Right ventricle myocardium superior (tissue), 1 donor: ENCODE measurements at regions of chr11 and their contacts with region 1.

Region 1: DNA sequence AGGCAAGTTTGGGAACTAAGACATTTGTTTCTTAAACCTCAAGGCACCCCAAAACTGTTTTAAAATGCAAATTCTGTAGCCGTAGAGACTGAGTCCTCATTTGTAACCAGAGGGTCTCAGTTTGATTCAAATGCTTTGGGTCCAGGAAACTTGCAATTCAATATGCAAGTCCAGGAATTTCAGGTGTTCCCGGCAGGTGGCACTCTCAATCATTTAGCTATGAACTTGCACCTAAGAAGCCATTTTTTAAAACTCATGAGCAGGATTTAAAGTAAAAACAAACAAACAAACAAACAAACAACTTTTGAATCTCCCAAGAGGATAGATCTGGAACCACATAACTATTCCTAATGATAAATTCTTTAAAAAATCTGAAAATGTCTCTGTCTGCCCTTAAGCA is 8.7 kb upstream of the ABTB2 start:
- DNase-seq: no peak
- ATAC-seq: no peak

Region 2: DNA sequence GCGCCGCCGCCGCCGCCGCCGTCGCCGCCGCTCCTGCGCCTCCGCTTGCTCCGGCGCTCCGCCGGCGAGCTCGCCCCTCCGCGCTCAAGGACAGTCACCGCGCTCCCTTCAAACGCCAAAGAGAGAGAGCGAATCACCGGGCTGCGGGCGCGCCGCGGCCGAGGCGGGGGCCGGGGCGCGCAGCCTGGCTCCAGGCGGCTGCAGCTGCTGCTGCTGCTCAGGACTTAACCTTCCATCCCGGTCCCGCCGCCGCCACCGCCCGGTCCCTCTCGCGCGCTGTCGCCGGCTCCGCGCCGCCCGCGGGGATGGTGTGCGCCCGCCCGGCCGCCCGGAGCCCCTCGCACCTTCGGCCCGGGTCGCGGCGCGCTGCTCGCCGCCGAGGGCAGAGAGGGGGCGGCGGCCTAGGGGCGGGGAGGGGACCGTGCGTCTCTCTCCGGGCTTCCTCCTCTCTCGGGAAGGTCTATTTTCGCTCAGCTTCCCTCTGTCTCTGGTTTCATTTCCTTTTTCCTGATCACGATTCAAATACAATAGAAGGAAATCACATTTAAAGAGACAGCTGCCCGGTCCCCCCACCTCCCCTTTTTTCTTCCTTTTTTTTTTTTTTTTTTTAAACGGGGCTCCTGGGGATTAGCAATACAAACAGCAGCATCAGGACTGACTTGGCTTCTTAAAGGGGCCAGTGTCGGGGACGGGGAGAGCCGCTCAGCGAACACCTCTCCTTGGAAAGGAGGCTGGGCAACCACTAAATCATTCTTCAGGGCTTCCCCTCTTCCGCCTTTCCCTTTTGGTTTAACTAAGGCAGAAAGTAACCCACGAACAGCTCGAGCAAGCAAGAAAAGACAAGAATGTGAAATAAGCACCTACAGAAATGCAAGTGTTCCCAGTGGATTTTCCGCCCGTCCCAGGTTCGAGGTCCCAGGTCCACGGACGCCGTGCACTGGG is 496.8 kb before region 1 on chr11:
- intact Hi-C with region 1: loop called (anchors 10 kb)
- DNase-seq: peak; percentile 69
- ATAC-seq: peak; percentile 73

Region 3: DNA sequence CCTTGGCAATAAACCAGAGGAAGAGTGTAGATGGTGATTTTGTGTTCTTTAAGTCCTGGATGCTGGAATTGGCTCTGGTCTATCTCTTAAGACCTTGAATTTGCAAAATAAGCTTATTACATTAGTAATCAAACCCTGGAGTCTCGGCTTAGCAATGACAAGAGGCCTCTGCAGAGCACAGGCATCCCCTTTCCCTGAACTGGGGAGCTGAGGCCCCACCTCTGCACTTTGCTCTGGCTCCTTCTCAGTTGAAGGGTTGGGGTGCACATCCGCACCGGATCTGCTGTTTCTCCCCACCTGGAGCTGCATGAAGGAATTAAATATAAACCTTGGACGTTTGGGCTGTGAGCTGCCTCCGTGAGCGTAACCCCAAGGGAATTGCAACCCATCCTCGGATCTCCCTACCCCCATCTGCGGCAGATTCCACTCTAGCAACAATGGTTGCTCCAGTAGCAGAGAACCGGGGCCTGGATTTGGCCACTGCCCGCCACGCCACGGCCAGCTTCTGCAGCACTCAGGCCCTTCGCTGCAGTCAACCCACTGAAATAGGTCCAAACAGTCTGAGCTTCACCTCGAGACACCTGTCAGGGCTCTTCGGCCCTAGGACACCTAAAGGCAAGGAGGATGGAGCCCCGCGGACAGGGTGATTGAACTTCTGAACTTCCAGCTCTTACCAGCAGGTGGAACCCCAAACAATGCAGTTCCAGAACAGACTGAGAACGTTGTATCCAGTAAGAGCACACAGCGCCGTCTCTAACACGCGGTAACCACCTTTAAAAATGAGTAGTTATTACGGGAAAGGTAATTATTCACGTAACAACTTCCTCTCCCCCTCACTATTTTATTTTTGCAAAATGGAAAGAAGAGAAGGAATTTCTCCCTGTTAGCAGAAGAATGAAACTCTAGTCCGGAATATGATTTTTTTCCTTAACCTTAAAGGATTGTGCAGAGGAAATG is 369.7 kb before region 1 on chr11:
- intact Hi-C with region 1: loop called (anchors 5 kb)
- DNase-seq: peak; percentile 54
- ATAC-seq: peak; percentile 97

Region 4: DNA sequence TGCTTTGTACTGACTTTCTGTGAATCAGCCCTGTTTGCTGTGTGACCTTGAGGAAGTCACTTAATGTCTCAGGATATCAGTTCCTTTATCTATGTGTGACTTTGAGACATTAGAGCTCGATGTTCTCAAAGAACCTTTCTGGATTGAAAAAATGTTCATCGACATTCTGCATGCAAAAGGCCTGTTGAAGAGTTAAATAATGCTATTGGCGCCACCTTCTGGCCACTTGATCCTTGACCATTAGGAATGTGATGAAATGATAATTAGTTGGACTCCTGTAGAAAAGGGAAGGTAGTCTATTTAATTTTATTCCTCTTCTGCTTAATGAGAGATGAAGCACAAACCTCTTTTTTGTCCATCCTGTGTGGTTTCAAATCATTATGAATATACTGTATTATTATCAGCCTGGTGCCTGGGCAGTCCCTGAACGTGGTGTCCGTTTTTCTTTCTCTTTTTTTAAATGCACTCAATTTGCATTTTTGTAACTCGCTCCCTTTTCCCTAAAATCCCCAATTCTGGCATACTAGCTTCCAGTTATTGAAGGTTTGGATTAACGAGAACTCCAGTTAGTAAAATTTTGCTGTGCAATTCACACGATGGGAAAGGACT is 126.4 kb after region 1 on chr11:
- intact Hi-C with region 1: loop called (anchors 5 kb)
- DNase-seq: peak; percentile 57
- ATAC-seq: peak; percentile 48